ENCODE measurements at regions of chr2 and their contacts with region 1.

Region 1: DNA sequence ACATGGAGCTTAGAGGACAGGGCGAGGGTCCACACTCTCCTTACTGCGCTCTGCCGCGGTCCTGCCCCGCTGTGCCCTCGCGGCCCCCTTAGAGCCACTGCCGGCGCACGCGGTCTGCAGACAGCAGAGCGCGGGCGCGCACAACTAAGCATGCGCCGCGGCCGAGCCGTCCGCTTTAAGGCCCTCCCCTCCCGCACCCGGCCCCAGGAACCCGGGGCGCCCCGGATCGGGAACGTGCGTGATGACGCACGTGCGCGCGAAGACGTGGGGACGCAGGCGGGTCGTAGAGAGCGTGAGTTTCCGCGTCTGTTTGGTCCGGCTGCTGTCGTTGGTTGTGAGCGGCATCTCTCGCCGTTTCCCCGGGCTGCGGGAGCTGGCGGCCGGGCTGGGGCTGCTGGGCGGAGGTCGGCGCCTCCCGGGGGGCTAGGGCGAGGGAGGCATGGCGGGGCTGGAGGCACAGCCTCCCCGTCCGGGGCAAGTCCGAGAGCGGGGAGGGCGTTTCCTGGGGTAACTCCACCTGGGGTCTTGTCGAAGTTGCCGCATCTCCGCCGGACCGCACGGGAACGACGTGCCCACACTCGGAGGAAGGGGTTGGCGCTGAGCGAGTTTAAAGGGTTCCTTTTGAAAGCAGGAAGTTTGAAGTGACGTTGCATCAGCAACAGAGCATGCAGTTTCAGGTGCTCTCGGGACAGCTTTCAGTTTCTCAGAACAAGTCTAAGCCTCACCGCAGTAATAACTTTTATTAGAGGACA is at the start of gene RHBDD1:
- DNase-seq: peak; percentile 93
- H3K4me3 Mint-ChIP-seq: peak within 1 kb of the TSS; percentile 92
- H3K27ac Mint-ChIP-seq: peak within 1 kb of the TSS; percentile 98
- H3K4me1 Mint-ChIP-seq: peaks cover 55% of the 10 kb centered on the region
- H3K27me3 Mint-ChIP-seq: no peaks in the 10 kb centered on the region
- total RNA-seq, gene RHBDD1: 42.6 to 43.3 TPM

Region 2: GRCh38 chr2:224946895-224947294 is 1889.1 kb before region 1 on chr2:
- CTCF ChIA-PET with region 1: no interaction called
- intact Hi-C with region 1: loop called (anchors 5 kb)
- DNase-seq: no peak
- H3K4me3 Mint-ChIP-seq: peak overlapping the region; percentile 82
- H3K27ac Mint-ChIP-seq: peak overlapping the region; percentile 94
- H3K4me1 Mint-ChIP-seq: peaks cover 58% of the 10 kb centered on the region
- H3K27me3 Mint-ChIP-seq: no peaks in the 10 kb centered on the region

Region 3: DNA sequence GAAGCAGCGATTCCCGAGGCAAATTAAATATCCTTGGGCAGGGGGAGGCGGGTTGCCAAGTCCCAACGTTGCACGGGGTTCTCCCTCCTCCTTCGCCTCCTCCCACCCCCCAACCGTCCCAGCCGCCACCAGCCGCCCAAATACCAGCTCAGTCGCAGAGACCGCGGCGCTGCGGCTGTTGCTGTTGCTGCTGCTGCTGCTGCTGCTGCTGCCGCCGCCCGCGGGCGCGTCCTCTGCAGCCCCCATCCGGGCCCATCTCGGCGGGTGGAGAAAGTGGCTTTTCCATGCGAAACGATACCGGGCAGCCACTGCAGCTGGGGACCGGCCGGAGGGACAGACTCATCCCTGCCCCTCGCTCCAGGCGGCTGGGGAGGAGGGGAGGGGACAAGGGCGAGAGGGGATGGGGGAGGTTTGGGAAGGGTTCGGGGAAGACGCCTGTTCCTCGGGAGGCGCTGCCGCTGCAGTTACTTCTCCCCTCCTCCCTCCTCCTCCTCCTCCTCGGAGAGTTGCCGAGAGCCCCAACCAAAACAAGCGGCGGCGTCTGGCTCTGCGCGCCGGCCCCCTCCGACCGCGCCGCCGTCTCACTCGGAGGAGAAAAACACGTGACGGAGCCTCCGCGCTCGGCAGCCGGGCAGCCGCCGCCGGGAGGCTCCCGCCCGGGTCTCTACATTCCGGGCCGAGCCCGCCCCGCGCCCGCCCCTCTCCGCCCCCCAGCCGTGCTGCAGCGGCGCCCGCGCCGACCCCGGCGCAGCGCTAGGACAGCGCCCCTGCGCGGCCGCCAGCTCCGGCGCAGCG is 36.6 kb before region 1 on chr2 and contains the start of gene IRS1:
- CTCF ChIA-PET with region 1: interaction called, 12 read pairs
- intact Hi-C with region 1: loop called (anchors 1 kb)
- DNase-seq: peak; percentile 53
- H3K4me3 Mint-ChIP-seq: peak within 1 kb of the TSS; percentile 83
- H3K27ac Mint-ChIP-seq: peak within 1 kb of the TSS; percentile 44
- H3K4me1 Mint-ChIP-seq: peaks cover 22% of the 10 kb centered on the region
- H3K27me3 Mint-ChIP-seq: peaks cover 1% of the 10 kb centered on the region
- total RNA-seq, gene IRS1: 2.6 to 2.7 TPM

Region 4: GRCh38 chr2:226971084-226971483 is 135.1 kb after region 1 on chr2:
- CTCF ChIA-PET with region 1: no interaction called
- intact Hi-C with region 1: loop called (anchors 2 kb)
- DNase-seq: no peak
- H3K4me3 Mint-ChIP-seq: peak overlapping the region; percentile 11
- H3K27ac Mint-ChIP-seq: peak overlapping the region; percentile 2
- H3K4me1 Mint-ChIP-seq: peaks cover 26% of the 10 kb centered on the region
- H3K27me3 Mint-ChIP-seq: no peaks in the 10 kb centered on the region

Region 5: DNA sequence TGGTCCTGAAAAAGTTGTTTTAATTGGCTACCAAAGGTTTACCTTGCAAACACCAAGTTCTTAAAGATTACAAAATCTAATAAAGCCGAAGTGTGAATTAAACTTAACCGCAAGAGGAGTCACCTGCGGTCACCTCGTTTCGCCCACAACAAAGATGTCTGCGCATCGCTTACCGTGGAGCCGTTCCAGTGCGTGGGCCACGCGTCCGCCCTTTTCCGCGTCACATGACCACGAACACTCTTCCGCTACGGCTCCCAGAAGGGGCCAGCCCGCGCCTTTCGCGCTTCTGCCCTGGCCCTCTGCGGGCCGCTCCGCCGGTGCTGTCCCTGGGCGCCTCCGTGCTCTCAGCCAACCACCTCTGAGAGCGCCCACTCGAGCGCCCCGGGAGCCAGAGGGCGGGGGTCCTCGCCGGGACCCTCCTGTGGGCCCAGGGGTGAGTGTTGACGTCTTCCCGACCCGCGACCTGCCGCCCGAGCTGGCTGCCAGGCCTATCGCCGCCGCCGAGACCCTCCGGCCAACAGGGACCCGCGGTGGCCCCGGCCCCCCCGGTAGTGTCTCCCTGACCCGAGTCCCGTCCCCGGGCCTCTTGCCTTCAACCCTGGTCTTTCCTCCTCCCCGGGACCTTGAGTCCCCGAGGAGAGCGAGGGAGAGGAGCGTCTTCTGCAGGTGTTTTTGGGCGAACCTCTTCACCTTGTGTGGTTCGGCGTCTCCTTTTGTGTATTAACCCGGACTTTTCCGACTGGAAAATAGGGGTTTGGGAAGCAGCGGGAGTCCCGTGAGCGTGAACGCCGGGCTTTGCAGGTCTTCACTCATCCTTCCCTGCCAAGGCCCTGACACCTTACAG is 489.2 kb after region 1 on chr2 and contains the start of gene MFF:
- CTCF ChIA-PET with region 1: no interaction called
- intact Hi-C with region 1: loop called (anchors 1 kb)
- DNase-seq: peak; percentile 98
- H3K4me3 Mint-ChIP-seq: peak within 1 kb of the TSS; percentile 90
- H3K27ac Mint-ChIP-seq: peak within 1 kb of the TSS; percentile 88
- H3K4me1 Mint-ChIP-seq: peaks cover 24% of the 10 kb centered on the region
- H3K27me3 Mint-ChIP-seq: peaks cover 6% of the 10 kb centered on the region
- total RNA-seq, gene MFF: 82.1 to 82.2 TPM

Region 6: GRCh38 chr2:227335713-227336112 is 499.7 kb after region 1 on chr2:
- CTCF ChIA-PET with region 1: no interaction called
- intact Hi-C with region 1: no loop called
- DNase-seq: no peak
- H3K4me3 Mint-ChIP-seq: no peak overlapping the region
- H3K27ac Mint-ChIP-seq: peak overlapping the region; percentile 54
- H3K4me1 Mint-ChIP-seq: peaks cover 21% of the 10 kb centered on the region
- H3K27me3 Mint-ChIP-seq: no peaks in the 10 kb centered on the region

Region 7: GRCh38 chr2:227460070-227460485 is 624.1 kb after region 1 on chr2:
- CTCF ChIA-PET with region 1: no interaction called
- intact Hi-C with region 1: loop called (anchors 2 kb)
- DNase-seq: peak; percentile 85
- H3K4me3 Mint-ChIP-seq: peak overlapping the region; percentile 65
- H3K27ac Mint-ChIP-seq: peak overlapping the region; percentile 99
- H3K4me1 Mint-ChIP-seq: peaks cover 85% of the 10 kb centered on the region
- H3K27me3 Mint-ChIP-seq: no peaks in the 10 kb centered on the region

Measured in activated naive CD4-positive, alpha-beta T cell treated with anti-CD3 and anti-CD28 coated beads for 36 hours (primary cell).